ENCODE measurements at regions of chr12 and their contacts with region 1.

Region 1: DNA sequence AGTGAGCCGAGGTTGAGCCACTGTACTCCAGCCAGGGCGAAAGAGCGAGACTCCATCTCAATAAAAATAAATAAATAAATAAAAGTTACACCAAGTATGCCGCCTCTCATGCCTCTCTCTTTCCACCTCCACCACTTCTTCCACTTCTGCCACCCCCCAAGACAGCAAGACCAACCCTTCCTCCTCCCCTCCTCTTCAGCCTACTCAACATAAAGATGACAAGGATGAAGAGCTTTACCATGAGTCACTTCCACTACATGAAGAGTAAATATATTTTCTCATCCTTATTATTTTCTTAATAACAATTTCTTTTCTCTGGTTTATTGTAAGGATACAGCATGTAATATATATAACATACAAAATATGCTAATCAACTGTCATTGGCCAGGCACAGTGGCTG is 3.6 kb upstream of the TMED2 start:
- DNase-seq: no peak
- H3K4me3 Mint-ChIP-seq: no peak overlapping the region
- H3K27ac Mint-ChIP-seq: no peak overlapping the region
- H3K4me1 Mint-ChIP-seq: peaks cover 14% of the 10 kb centered on the region
- H3K27me3 Mint-ChIP-seq: no peaks in the 10 kb centered on the region

Region 2: DNA sequence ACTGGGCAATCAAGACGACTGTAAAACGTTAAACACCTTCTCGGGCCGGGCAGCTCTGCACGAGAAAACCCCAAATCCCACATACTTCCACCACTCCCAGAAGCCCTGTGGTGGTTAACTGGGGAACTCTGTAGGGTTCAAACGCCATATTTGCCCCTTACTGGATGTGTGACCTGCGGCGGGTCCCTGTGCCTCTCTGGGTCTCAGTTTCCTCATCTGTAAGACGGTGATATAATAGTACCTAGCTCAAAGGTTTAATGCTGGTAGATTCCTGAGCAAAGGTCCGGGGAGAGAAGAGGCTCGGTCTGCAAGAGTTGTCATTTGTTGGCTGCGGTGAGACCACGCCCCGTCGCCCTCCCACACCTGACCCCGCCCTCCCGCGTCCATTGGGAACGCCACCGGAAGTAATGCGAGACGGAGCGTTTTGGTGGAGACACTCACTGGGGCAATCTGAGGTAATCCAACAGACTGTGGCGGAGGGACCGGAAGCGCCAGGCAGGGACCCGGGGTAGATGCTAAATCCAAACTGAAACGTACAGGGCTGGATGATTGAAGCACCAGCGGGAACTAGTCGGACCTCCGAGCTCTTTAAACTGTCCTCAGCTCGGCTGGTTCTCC is 606.4 kb before region 1 on chr12:
- intact Hi-C with region 1: loop called (anchors 5 kb)
- DNase-seq: peak; percentile 98
- H3K4me3 Mint-ChIP-seq: peak overlapping the region; percentile 93
- H3K27ac Mint-ChIP-seq: peak overlapping the region; percentile 98
- H3K4me1 Mint-ChIP-seq: peaks cover 11% of the 10 kb centered on the region
- H3K27me3 Mint-ChIP-seq: no peaks in the 10 kb centered on the region

Region 3: GRCh38 chr12:123365025-123365917 is 215.5 kb before region 1 on chr12:
- intact Hi-C with region 1: loop called (anchors 2 kb)
- DNase-seq: peak; percentile 97
- H3K4me3 Mint-ChIP-seq: peak overlapping the region; percentile 82
- H3K27ac Mint-ChIP-seq: peak overlapping the region; percentile 93
- H3K4me1 Mint-ChIP-seq: peaks cover 8% of the 10 kb centered on the region
- H3K27me3 Mint-ChIP-seq: no peaks in the 10 kb centered on the region

Region 4: GRCh38 chr12:123388177-123388947 is 192.4 kb before region 1 on chr12:
- intact Hi-C with region 1: loop called (anchors 5 kb)
- DNase-seq: peak; percentile 75
- H3K4me3 Mint-ChIP-seq: peak overlapping the region; percentile 81
- H3K27ac Mint-ChIP-seq: peak overlapping the region; percentile 90
- H3K4me1 Mint-ChIP-seq: peaks cover 36% of the 10 kb centered on the region
- H3K27me3 Mint-ChIP-seq: no peaks in the 10 kb centered on the region

Region 5: DNA sequence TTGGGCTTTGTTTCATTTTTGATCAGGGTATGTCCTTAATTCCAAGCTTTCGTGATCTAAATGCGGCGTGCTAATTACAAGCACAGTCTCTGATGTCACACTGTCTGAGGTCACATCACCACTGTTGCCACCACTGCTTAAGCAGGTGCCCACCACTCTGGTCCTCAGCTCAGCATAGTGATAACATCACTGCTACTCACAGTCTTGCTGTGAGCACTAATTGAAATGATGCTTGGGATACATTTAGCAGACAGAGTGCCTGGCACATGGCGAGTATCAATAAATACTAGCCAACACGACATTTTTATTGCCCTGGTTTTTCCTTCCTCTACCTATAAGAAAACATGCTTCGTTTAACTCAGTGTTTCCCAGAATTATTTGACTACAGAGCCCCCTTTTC is 152.2 kb before region 1 on chr12:
- intact Hi-C with region 1: loop called (anchors 2 kb)
- DNase-seq: no peak
- H3K4me3 Mint-ChIP-seq: no peak overlapping the region
- H3K27ac Mint-ChIP-seq: peak overlapping the region; percentile 73
- H3K4me1 Mint-ChIP-seq: peaks cover 34% of the 10 kb centered on the region
- H3K27me3 Mint-ChIP-seq: no peaks in the 10 kb centered on the region

Region 6: GRCh38 chr12:123457980-123458783 is 122.6 kb before region 1 on chr12 and contains the start of gene SNRNP35:
- intact Hi-C with region 1: loop called (anchors 1 kb)
- DNase-seq: peak; percentile 81
- H3K4me3 Mint-ChIP-seq: peak within 1 kb of the TSS; percentile 94
- H3K27ac Mint-ChIP-seq: peak within 1 kb of the TSS; percentile 99
- H3K4me1 Mint-ChIP-seq: peaks cover 15% of the 10 kb centered on the region
- H3K27me3 Mint-ChIP-seq: no peaks in the 10 kb centered on the region
- total RNA-seq, gene SNRNP35: 27.1 and 36.4 TPM in 2 replicates

Region 7: DNA sequence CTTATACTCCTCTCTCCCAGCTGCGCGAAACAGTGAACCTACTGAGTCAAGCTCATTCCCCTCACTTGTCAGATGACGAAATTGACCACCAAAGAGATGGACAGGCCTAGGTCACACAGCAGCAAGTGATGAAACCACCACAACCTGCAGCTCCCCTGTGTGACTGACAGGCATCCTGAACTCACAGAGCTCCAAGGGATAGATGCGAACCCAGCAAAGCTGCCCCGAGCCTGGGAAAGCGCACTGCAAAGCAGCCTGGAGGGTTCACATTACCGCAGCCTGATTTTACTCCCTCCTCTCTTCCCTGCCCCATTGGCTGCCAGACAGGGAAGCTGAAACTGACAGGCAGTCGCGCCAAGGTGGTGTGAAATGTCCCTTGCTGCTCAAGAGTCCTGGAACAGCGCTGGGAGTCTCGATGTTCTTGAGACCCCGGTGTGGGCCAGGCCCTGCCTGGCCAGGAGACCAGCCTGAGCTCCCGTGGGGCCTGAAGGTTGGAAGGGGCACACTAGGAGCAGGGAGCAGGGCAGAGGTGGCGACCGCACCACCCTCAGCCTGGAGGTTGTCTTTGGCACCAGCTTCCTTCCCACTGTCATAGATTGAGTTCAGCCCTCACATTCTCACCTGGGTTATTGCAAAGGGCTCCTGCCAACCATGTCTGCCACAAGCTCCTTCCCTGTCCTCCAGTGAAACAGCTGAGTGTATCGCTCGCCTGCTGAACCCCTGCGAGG is 86.5 kb before region 1 on chr12:
- intact Hi-C with region 1: no loop called
- DNase-seq: no peak
- H3K4me3 Mint-ChIP-seq: no peak overlapping the region
- H3K27ac Mint-ChIP-seq: no peak overlapping the region
- H3K4me1 Mint-ChIP-seq: no peaks in the 10 kb centered on the region
- H3K27me3 Mint-ChIP-seq: no peaks in the 10 kb centered on the region

Region 8: DNA sequence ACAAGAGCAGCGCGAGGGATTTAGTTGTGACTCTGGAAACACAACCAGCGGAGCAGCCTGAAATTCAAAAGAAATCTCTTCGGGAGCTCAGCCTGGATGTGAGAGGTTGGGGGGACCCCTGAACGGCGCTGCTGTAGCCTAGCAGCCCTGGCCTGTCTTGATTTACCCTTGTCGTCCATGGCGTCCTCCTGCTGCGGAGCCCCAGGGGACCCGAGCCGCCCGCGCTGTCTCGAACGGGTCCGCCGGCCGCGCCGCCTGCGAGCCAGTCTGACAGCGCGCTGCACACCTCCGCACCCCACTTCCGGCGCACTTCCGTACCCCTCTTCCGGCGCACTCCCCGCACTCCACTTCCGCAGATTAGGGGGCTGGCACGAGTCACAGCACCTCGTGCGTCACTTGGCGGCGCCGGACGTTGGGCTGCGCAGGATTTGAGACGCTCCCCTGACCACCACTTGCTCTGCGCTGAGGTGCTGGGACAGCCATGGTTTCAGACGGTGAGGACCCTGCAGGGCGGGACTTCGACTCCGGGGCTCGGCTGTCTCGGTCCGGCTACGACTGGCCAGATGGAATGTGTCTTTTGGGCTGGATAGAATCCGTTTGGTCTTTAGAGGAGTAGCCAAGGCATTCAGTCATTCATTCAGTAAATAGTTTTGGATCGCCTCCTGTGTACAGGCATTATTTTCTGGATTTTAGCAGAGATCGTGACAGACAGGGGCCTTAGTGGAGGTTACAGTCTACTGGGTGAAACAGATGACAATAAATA is 52.8 kb after region 1 on chr12 and contains the starts of genes EIF2B1 and GTF2H3:
- intact Hi-C with region 1: loop called (anchors 1 kb)
- DNase-seq: peak; percentile 96
- H3K4me3 Mint-ChIP-seq: peak within 1 kb of the TSS; percentile 95
- H3K27ac Mint-ChIP-seq: peak within 1 kb of the TSS; percentile 95
- H3K4me1 Mint-ChIP-seq: peaks cover 16% of the 10 kb centered on the region
- H3K27me3 Mint-ChIP-seq: no peaks in the 10 kb centered on the region
- total RNA-seq, gene EIF2B1: 65.8 and 66.0 TPM in 2 replicates
- total RNA-seq, gene GTF2H3: 53.2 and 65.4 TPM in 2 replicates

Region 9: GRCh38 chr12:123696646-123697045 is 115.9 kb after region 1 on chr12:
- intact Hi-C with region 1: no loop called
- DNase-seq: no peak
- H3K4me3 Mint-ChIP-seq: no peak overlapping the region
- H3K27ac Mint-ChIP-seq: no peak overlapping the region
- H3K4me1 Mint-ChIP-seq: no peaks in the 10 kb centered on the region
- H3K27me3 Mint-ChIP-seq: no peaks in the 10 kb centered on the region

Measured in activated T-helper 2 cell treated with anti-CD3 and anti-CD28 coated beads, Interferon-gamma antibody, Interleukin-2, Interleukin-4, amounts not matched to agents 10 μg/mL and 5 μg/mL and 100 μg/mL, durations not matched to agents 14 hours and 24 hours and 36 hours (primary cell).